Activated T-helper 2 cell treated with anti-CD3 and anti-CD28 coated beads, Interferon-gamma antibody, Interleukin-2, Interleukin-4, amounts not matched to agents 10 μg/mL and 5 μg/mL and 100 μg/mL, durations not matched to agents 14 hours and 24 hours and 36 hours (primary cell): ENCODE measurements at regions of chr10 and their contacts with region 1.

Region 1: GRCh38 chr10:23362879-23363792 is 18.5 kb upstream of the C10orf67 start:
- DNase-seq: peak; percentile 24
- H3K4me3 Mint-ChIP-seq: peak overlapping the region; percentile 71
- H3K27ac Mint-ChIP-seq: peak overlapping the region; percentile 90
- H3K4me1 Mint-ChIP-seq: peaks cover 47% of the 10 kb centered on the region
- H3K27me3 Mint-ChIP-seq: no peaks in the 10 kb centered on the region

Region 2: GRCh38 chr10:23343591-23344225 is 19.4 kb before region 1 on chr10:
- intact Hi-C with region 1: loop called (anchors 2 kb)
- DNase-seq: no peak
- H3K4me3 Mint-ChIP-seq: peak overlapping the region; percentile 79
- H3K27ac Mint-ChIP-seq: no peak overlapping the region
- H3K4me1 Mint-ChIP-seq: peaks cover 25% of the 10 kb centered on the region
- H3K27me3 Mint-ChIP-seq: peaks cover 7% of the 10 kb centered on the region